SK-N-SH (cell line): ENCODE measurements at regions of chr5 and their contacts with region 1.

Region 1: GRCh38 chr5:175729829-175730277 is 72.0 kb downstream of the HRH2 start:
- DNase-seq: peak; percentile 92
- H3K4me3 ChIP-seq: peak overlapping the region; percentile 23 to 39; a peak in 2 of 4 replicates
- H3K27ac ChIP-seq: no peak overlapping the region
- H3K4me1 ChIP-seq: peaks cover 0 to 8% of the 10 kb centered on the region in 2 experiments; a peak in 1 of 4 replicates
- H3K27me3 ChIP-seq: no peaks in the 10 kb centered on the region
- CTCF ChIP-seq: peak; percentile 97
- EP300 ChIP-seq: no peak
- RAD21 ChIP-seq: peak; percentile 99

Region 2: GRCh38 chr5:174760721-174761120 is 969.1 kb before region 1 on chr5:
- CTCF ChIA-PET with region 1: no interaction called
- POLR2A ChIA-PET with region 1: no interaction called
- DNase-seq: no peak
- H3K4me3 ChIP-seq: no peak overlapping the region
- H3K27ac ChIP-seq: no peak overlapping the region
- H3K4me1 ChIP-seq: no peaks in the 10 kb centered on the region
- H3K27me3 ChIP-seq: no peaks in the 10 kb centered on the region
- CTCF ChIP-seq: no peak
- EP300 ChIP-seq: no peak
- RAD21 ChIP-seq: no peak

Region 3: DNA sequence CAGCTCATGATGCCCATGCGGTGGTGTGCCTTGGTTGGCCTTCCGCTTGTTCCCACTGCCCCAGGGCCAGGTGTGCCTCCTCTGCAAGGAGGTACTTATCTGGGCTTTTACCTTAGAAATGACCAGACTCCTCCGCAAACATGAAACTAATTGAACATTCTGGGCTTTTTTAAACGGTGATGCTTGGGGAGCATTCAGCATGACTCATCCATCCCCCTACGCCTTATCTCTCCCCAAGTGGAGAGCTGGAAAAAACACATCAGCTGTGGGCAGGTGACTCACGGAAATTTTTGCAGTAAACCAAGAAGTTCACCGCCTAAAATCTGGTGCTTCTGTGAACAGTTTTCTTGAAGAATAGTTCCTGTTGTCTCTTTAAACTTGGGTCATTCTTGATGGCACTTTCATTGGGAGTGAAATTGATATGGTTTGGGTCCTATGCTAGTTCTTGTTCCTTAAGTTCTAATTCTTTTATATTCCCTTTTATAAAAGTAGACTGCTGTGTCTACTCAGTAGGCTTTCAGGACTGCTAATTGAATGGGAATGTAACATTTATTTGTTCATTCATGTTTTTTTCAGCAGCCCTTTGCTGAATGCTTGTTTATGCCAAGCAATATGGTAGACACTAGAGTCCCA is 211.9 kb before region 1 on chr5:
- CTCF ChIA-PET with region 1: interaction called, 13 read pairs
- POLR2A ChIA-PET with region 1: no interaction called
- DNase-seq: no peak
- H3K4me3 ChIP-seq: no peak overlapping the region; a peak in 1 of 4 replicates
- H3K27ac ChIP-seq: peak overlapping the region in 1 of 2 experiments; percentile 30; a peak in 1 of 4 replicates
- H3K4me1 ChIP-seq: no peaks in the 10 kb centered on the region; a peak in 1 of 4 replicates
- H3K27me3 ChIP-seq: no peaks in the 10 kb centered on the region
- CTCF ChIP-seq: no peak
- EP300 ChIP-seq: no peak; a peak in 1 of 4 replicates
- RAD21 ChIP-seq: no peak

Region 4: GRCh38 chr5:175603987-175604739 is 125.7 kb before region 1 on chr5:
- CTCF ChIA-PET with region 1: no interaction called
- POLR2A ChIA-PET with region 1: no interaction called
- DNase-seq: no peak
- H3K4me3 ChIP-seq: no peak overlapping the region
- H3K27ac ChIP-seq: no peak overlapping the region
- H3K4me1 ChIP-seq: no peaks in the 10 kb centered on the region
- H3K27me3 ChIP-seq: no peaks in the 10 kb centered on the region
- CTCF ChIP-seq: no peak
- EP300 ChIP-seq: no peak
- RAD21 ChIP-seq: no peak

Region 5: DNA sequence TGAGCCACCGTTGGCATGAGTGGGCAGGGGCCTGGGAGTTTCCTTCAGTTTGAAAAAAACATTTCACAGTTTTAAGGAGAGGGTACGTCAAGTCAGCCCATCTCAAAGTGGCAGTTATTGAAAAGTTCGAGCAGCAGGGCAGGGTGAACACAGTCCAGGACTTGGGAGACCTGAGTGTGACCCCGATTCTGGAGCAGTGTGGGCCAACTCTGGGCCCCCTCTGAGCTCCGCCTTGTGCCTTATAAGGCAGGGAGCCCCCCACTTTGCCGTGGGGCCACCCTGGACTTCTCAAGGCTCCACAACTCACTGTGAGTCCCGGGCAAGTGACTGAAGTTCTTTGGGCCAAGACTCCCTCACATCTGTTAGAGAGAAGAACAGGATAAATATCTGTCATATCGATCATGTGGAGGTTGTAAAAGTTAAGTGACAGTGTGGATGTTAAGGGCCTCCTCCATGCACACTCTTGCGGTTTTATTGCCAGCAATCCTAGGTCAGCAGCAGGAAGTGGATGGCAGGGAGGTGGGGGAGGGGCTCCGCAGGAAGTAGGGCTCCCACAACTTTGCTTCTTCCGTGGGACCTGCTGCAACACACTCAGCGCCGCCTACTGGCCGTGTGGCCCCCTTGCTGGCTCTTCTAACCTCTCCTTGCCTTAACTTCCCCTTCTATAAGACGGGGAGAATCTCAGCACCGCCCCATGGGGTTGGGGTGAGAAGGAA is 33.6 kb before region 1 on chr5:
- CTCF ChIA-PET with region 1: interaction called, 13 read pairs
- POLR2A ChIA-PET with region 1: no interaction called
- DNase-seq: peak; percentile 55
- H3K4me3 ChIP-seq: no peak overlapping the region
- H3K27ac ChIP-seq: no peak overlapping the region
- H3K4me1 ChIP-seq: peaks cover 0 to 3% of the 10 kb centered on the region in 2 experiments; a peak in 1 of 4 replicates
- H3K27me3 ChIP-seq: no peaks in the 10 kb centered on the region
- CTCF ChIP-seq: peak; percentile 29
- EP300 ChIP-seq: no peak
- RAD21 ChIP-seq: peak; percentile 27; the same call in 1 of the 2 replicates

Region 6: GRCh38 chr5:175746851-175747250 is 17.0 kb after region 1 on chr5:
- CTCF ChIA-PET with region 1: interaction called, 64 read pairs
- POLR2A ChIA-PET with region 1: no interaction called
- DNase-seq: peak; percentile 58
- H3K4me3 ChIP-seq: no peak overlapping the region; a peak in 1 of 4 replicates
- H3K27ac ChIP-seq: no peak overlapping the region; a peak in 1 of 4 replicates
- H3K4me1 ChIP-seq: peaks cover 0 to 8% of the 10 kb centered on the region in 2 experiments; a peak in 1 of 4 replicates
- H3K27me3 ChIP-seq: no peaks in the 10 kb centered on the region
- CTCF ChIP-seq: no peak
- EP300 ChIP-seq: no peak
- RAD21 ChIP-seq: no peak

Region 7: GRCh38 chr5:175789670-175790069 is 59.8 kb after region 1 on chr5:
- CTCF ChIA-PET with region 1: interaction called, 15 read pairs
- POLR2A ChIA-PET with region 1: no interaction called
- DNase-seq: no peak
- H3K4me3 ChIP-seq: no peak overlapping the region
- H3K27ac ChIP-seq: no peak overlapping the region
- H3K4me1 ChIP-seq: no peaks in the 10 kb centered on the region
- H3K27me3 ChIP-seq: no peaks in the 10 kb centered on the region
- CTCF ChIP-seq: no peak
- EP300 ChIP-seq: no peak
- RAD21 ChIP-seq: no peak

Region 8: GRCh38 chr5:175853573-175854230 is 123.8 kb after region 1 on chr5:
- CTCF ChIA-PET with region 1: interaction called, 338 read pairs
- POLR2A ChIA-PET with region 1: no interaction called
- DNase-seq: no peak
- H3K4me3 ChIP-seq: no peak overlapping the region
- H3K27ac ChIP-seq: no peak overlapping the region; a peak in 2 of 4 replicates
- H3K4me1 ChIP-seq: peaks cover 0 to 20% of the 10 kb centered on the region in 2 experiments; a peak in 1 of 4 replicates
- H3K27me3 ChIP-seq: no peaks in the 10 kb centered on the region
- CTCF ChIP-seq: no peak
- EP300 ChIP-seq: no peak
- RAD21 ChIP-seq: no peak

Region 9: DNA sequence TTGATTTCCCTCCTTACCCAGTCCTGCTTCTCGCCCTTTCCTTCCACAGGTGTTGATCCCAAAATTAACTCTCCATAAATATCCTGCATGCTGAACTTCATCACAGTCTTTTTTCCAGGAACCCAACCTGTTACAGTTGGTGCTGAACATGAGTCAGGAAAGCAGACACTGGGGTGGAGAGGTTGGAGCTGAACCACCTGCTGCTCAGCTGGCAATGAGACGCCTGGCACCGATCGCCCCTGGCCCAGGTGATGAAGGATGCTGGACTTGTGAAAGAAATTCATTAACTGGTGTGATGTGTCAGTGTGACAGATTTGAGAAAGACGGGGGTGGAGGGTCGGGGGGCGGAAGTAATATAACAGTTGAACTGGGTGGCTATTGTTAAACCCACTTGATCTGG is 172.2 kb after region 1 on chr5:
- CTCF ChIA-PET with region 1: interaction called, 23 read pairs
- POLR2A ChIA-PET with region 1: no interaction called
- DNase-seq: no peak
- H3K4me3 ChIP-seq: no peak overlapping the region
- H3K27ac ChIP-seq: no peak overlapping the region
- H3K4me1 ChIP-seq: no peaks in the 10 kb centered on the region
- H3K27me3 ChIP-seq: no peaks in the 10 kb centered on the region
- CTCF ChIP-seq: no peak
- EP300 ChIP-seq: no peak
- RAD21 ChIP-seq: no peak

Region 10: DNA sequence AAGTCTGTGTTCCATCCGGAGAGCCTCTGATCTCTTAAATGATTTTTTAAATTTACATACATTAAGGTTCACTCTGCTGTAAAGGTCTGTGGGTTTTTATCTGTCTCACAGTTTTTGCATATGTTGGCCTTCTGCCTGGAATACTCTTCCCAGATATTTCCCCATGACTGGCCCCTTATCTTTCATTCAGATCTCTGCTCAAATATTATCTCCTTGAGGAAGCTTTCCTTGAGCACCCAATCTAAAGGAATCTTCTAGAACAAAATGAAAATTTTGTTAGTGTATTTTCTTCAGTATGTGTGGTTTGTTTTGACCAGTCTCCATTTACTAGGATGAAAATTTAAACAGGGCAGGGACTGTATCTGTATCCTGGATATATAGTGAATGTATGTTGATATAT is 744.7 kb after region 1 on chr5:
- CTCF ChIA-PET with region 1: no interaction called
- POLR2A ChIA-PET with region 1: no interaction called
- DNase-seq: peak; percentile 20
- H3K4me3 ChIP-seq: no peak overlapping the region
- H3K27ac ChIP-seq: peak overlapping the region; percentile 45 to 72; a peak in 3 of 4 replicates
- H3K4me1 ChIP-seq: 0 out of 4 replicates have a peak, but pooled peaks cover 0 to 7% of the 10 kb centered on the region in 2 experiments
- H3K27me3 ChIP-seq: no peaks in the 10 kb centered on the region
- CTCF ChIP-seq: no peak
- EP300 ChIP-seq: no peak
- RAD21 ChIP-seq: no peak